AG04450 (cell line): ENCODE measurements at regions of chr10 and their contacts with region 1.

Region 1: GRCh38 chr10:69392481-69393000 is 24.2 kb downstream of the TACR2 start:
- DNase-seq: no peak
- H3K4me3 ChIP-seq: no peak overlapping the region
- H3K27ac ChIP-seq: no peak overlapping the region
- H3K27me3 ChIP-seq: no peaks in the 10 kb centered on the region
- CTCF ChIP-seq: peak; percentile 98

Region 2: GRCh38 chr10:69237528-69238159 is 154.9 kb before region 1 on chr10:
- CTCF ChIA-PET with region 1: interaction called, 84 read pairs
- POLR2A ChIA-PET with region 1: interaction called, 4 read pairs
- DNase-seq: peak; percentile 36
- H3K4me3 ChIP-seq: no peak overlapping the region
- H3K27ac ChIP-seq: no peak overlapping the region
- H3K27me3 ChIP-seq: peaks cover 3% of the 10 kb centered on the region
- CTCF ChIP-seq: peak; percentile 94

Region 3: GRCh38 chr10:69403519-69403918 is 11.0 kb after region 1 on chr10:
- CTCF ChIA-PET with region 1: interaction called, 12 read pairs
- POLR2A ChIA-PET with region 1: no interaction called
- DNase-seq: peak; percentile 76
- H3K4me3 ChIP-seq: no peak overlapping the region
- H3K27ac ChIP-seq: peak overlapping the region; percentile 62
- H3K27me3 ChIP-seq: no peaks in the 10 kb centered on the region
- CTCF ChIP-seq: no peak